B cell (primary cell): ENCODE measurements at regions of chr15 and their contacts with region 1.

Region 1: GRCh38 chr15:92797168-92797951 is 102.8 kb upstream of the CHD2 start:
- DNase-seq: peak; percentile 87
- ATAC-seq: peak; percentile 78
- H3K4me3 ChIP-seq: no peak overlapping the region
- H3K4me3 Mint-ChIP-seq: no peak overlapping the region
- H3K27ac ChIP-seq: no peak overlapping the region
- H3K27ac Mint-ChIP-seq: peak overlapping the region; percentile 54
- H3K4me1 ChIP-seq: peaks cover 4% of the 10 kb centered on the region in 2 donors
- H3K4me1 Mint-ChIP-seq: peaks cover 3% of the 10 kb centered on the region
- H3K27me3 ChIP-seq: no peaks in the 10 kb centered on the region
- H3K27me3 Mint-ChIP-seq: no peaks in the 10 kb centered on the region
- CTCF ChIP-seq: peak; percentile 79

Region 2: DNA sequence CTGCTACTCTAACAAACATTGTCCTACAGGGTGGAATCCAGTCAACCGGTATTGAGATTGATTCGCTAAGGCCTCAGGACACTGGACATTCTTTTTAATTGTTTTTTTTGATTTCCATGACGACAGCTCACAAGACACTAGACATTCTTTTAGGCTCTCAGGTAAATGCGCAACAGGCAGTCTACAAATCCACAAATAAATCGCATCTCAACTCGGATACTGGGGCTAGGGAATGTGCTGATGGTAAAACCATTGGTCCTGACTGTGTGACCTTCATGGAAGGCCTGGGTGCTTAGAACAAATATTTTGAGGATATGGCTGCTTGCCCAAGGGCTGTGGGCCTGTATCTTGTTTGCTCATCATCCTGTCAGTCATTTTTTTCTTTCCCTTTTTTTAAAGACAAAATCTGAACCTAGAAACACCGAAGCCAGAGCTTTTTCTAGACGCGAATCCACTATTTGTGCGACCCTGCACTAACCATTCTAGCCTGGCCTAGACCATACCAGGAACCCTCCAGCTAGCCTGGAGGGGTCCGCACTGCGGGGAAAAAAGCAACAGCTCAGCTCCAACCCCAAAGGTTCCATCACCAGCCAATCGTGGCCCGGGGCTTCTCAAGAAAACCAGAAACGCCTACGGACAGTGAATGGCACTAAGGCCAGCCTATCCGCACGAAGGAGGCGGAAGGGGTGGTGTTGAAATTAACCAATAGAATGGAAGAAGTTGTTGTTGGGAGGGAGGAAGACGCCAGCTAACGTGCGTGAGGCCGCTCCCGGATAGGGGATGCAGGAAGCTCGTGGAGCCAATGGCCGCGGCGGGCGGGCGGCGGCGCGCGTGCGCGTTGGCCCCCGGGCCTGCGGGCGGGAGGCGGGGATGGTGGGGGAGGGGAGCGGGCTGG is 84.7 kb after region 1 on chr15:
- CTCF ChIA-PET with region 1: interaction called, 21 read pairs
- POLR2A ChIA-PET with region 1: interaction called, 6 read pairs
- intact Hi-C with region 1: loop called (anchors 1 kb)
- DNase-seq: peak; percentile 99
- ATAC-seq: peak; percentile 90
- H3K4me3 ChIP-seq: peak overlapping the region; percentile 43 to 77 (median 56)
- H3K4me3 Mint-ChIP-seq: peak overlapping the region; percentile 93
- H3K27ac ChIP-seq: peak overlapping the region; percentile 88 to 89
- H3K27ac Mint-ChIP-seq: peak overlapping the region; percentile 99
- H3K4me1 ChIP-seq: peaks cover 28 to 36% of the 10 kb centered on the region in 2 donors
- H3K4me1 Mint-ChIP-seq: peaks cover 41% of the 10 kb centered on the region
- H3K27me3 ChIP-seq: no peaks in the 10 kb centered on the region
- H3K27me3 Mint-ChIP-seq: no peaks in the 10 kb centered on the region
- CTCF ChIP-seq: no peak

Region 3: GRCh38 chr15:92917606-92918407 is 120.4 kb after region 1 on chr15:
- CTCF ChIA-PET with region 1: interaction called, 188 read pairs
- POLR2A ChIA-PET with region 1: interaction called, 10 read pairs
- intact Hi-C with region 1: loop called (anchors 1 kb)
- DNase-seq: peak; percentile 94
- ATAC-seq: peak; percentile 44
- H3K4me3 ChIP-seq: peak overlapping the region in 1 of 5 experiments; percentile 8
- H3K4me3 Mint-ChIP-seq: peak overlapping the region; percentile 74
- H3K27ac ChIP-seq: peak overlapping the region; percentile 83 to 93
- H3K27ac Mint-ChIP-seq: peak overlapping the region; percentile 93
- H3K4me1 ChIP-seq: peaks cover 73 to 77% of the 10 kb centered on the region in 2 donors
- H3K4me1 Mint-ChIP-seq: peaks cover 80% of the 10 kb centered on the region
- H3K27me3 ChIP-seq: no peaks in the 10 kb centered on the region
- H3K27me3 Mint-ChIP-seq: no peaks in the 10 kb centered on the region
- CTCF ChIP-seq: peak; percentile 95

Region 4: GRCh38 chr15:92938387-92938786 is 141.0 kb after region 1 on chr15:
- CTCF ChIA-PET with region 1: interaction called, 81 read pairs
- POLR2A ChIA-PET with region 1: no interaction called
- intact Hi-C with region 1: no loop called
- DNase-seq: no peak
- ATAC-seq: no peak
- H3K4me3 ChIP-seq: no peak overlapping the region
- H3K4me3 Mint-ChIP-seq: no peak overlapping the region
- H3K27ac ChIP-seq: peak overlapping the region in 1 of 2 donors; percentile 6
- H3K27ac Mint-ChIP-seq: no peak overlapping the region
- H3K4me1 ChIP-seq: peaks cover 0 to 5% of the 10 kb centered on the region in 2 donors
- H3K4me1 Mint-ChIP-seq: peaks cover 9% of the 10 kb centered on the region
- H3K27me3 ChIP-seq: no peaks in the 10 kb centered on the region
- H3K27me3 Mint-ChIP-seq: no peaks in the 10 kb centered on the region
- CTCF ChIP-seq: peak; percentile 55

Region 5: DNA sequence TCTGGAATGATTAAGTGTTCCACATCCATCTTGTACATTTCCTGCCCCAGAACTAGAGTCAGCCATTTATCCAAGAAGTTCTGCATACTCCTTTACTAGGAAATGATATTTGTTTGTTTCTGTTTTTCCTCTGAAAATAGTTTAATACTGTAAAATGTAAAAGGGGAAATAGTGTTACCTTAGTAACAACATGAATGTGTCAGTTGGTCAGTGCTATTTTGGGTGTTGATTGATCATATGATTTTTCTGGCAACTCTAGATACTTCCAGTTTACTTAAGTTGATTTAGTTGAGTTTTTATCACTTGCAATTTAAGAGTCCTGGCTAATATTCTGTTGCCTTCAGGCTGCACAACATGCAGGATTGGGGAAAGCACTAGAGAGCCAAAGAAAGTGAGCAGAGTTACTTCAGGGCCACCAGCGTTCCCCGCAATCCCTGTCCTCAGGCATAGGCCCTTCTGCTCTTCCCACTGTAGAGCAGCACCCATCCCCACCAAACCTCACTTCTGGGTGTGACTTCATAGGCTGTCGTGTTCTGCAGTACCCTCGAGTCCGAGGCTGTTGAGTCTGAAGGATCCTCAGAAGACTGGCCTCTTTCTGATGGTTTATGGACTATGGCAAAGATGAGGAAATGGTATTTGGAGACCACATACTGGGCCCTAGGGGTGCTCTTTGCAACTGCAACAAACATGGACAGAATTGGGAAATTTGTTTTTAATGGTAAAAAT is 171.7 kb after region 1 on chr15:
- CTCF ChIA-PET with region 1: interaction called, 10 read pairs
- POLR2A ChIA-PET with region 1: no interaction called
- intact Hi-C with region 1: no loop called
- DNase-seq: no peak
- ATAC-seq: peak; percentile 24
- H3K4me3 ChIP-seq: no peak overlapping the region
- H3K4me3 Mint-ChIP-seq: no peak overlapping the region
- H3K27ac ChIP-seq: peak overlapping the region in 1 of 2 donors; percentile 43
- H3K27ac Mint-ChIP-seq: peak overlapping the region; percentile 69
- H3K4me1 ChIP-seq: peaks cover 0 to 9% of the 10 kb centered on the region in 2 donors
- H3K4me1 Mint-ChIP-seq: peaks cover 22% of the 10 kb centered on the region
- H3K27me3 ChIP-seq: no peaks in the 10 kb centered on the region
- H3K27me3 Mint-ChIP-seq: no peaks in the 10 kb centered on the region
- CTCF ChIP-seq: no peak